Left cardiac atrium (tissue), 4 donors: ENCODE measurements at regions of chr6 and their contacts with region 1.

Region 1: DNA sequence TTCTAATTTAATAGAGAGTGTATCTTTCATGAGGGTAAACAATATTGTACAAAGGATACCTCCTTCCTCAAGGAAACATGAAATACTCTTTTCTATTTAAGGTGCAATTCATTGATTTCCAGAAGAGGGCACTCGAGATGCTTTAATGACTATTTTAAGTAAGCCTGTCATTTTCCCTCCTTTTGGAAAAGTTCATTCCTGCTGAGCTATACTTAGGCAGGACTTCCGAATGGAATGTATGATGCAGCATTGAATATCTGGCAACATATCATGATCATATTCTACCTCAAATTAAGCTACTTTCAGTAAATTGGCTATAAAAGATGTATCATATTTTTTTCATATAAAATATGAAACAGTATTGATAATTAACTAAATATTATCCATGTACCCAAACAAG is 5.0 kb downstream of the DST start:
- DNase-seq: no peak
- ATAC-seq: peak; percentile 71 to 77

Region 2: GRCh38 chr6:56046576-56046975 is 591.1 kb before region 1 on chr6:
- intact Hi-C with region 1: no loop called
- DNase-seq: peak; percentile 67
- ATAC-seq: peak; percentile 38 to 86

Region 3: DNA sequence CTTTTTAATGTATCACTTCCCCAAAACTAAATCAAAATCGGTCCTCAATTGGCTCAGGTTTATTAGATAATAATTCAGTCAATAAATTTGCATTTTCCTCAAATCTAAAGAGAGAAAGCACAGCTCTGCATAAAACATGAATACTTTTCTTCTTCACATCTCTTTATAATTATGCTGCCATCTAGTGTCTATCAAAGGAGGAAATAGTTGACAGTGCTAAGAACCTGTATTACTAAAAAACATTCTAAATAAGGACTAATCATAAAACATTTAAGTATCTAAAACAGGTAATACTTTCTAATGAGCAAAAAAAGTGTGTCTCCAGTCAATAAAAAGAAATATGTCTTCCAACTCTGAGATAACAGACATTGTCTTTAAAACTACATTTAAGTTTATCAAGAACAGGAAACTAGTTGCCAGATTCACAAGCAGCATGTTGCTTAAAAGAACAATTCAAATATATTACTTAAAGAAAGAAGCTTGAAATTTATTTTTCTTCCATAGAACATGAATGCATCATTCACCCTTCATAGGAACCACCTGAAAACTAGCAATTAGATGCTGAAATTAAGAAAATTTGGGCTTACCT is 61.5 kb after region 1 on chr6:
- intact Hi-C with region 1: loop called (anchors 2 to 5 kb)
- DNase-seq: no peak
- ATAC-seq: peak; percentile 65 to 69

Region 4: DNA sequence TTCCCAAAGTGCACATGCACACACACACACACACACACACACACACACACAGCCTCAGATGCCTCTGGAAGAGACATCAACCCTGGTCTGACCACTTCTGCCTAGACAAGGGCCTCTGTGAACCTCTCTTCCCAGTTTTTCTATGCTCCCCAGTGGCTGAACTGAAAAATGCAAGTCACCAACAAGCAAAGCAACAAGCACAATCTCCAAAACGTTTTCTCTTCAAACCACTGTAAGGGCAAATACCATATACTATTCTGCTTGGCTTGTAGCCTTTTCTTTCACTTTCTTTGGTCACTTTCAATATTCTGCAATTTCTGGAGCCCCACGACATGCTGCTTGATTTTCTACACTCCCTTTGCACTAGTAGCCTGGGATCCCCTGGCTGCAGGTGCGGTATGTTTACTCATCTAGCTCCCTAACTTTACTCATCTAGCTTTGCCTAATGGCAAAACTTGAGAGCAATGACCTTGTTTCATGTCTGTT is 126.5 kb after region 1 on chr6:
- intact Hi-C with region 1: loop called in 1 of 2 experiments (anchors 5 kb)
- DNase-seq: no peak
- ATAC-seq: peak; percentile 58 to 68

Region 5: DNA sequence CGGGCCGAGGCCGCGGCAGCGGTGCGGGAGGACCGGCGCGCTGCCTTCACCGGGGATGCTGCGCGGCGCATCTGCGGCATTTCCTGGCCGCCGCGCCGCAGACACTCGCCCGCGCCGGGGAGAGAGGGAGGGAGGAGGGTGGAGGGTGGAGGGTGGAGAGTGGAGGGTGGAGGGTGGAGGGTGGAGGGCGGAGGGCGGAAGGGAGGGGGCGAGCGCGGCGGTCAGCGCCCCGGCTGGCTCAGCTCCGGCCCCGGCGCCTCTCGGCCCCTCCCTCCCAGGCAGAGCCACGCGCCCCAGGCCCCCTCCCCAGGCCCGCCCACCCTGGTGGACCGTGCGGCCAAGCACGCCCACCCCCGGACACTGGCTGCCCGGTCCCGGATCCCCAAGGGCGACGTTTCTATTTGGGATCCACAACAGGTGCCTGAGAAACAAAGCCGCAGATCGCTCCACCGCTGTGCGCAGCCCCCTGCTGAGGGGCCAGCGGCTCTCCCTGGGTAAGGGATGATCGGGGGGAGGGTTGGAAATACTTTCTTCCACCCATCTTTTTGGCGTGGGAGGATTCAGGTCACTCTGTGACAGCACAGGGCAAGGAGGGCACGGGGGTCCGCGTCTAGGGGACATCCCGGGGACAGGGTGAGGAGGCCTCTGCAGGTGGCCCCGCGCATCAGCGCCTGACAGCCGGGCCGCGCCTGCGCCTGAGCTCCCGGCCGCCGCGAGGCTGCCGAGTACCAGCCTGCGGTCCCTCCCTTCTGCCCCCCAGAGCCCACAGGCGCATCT is 206.1 kb after region 1 on chr6:
- intact Hi-C with region 1: loop called in 1 of 2 experiments (anchors 10 kb)
- DNase-seq: peak; percentile 77
- ATAC-seq: peak; percentile 94 to 95

Region 6: GRCh38 chr6:56851541-56852259 is 214.1 kb after region 1 on chr6:
- intact Hi-C with region 1: loop called (anchors 5 to 10 kb)
- DNase-seq: no peak
- ATAC-seq: peak; percentile 91 to 92

Region 7: GRCh38 chr6:57006131-57006737 is 368.6 kb after region 1 on chr6:
- intact Hi-C with region 1: no loop called
- DNase-seq: no peak
- ATAC-seq: no peak